ENCODE measurements at regions of chr1 and their contacts with region 1.

Region 1: DNA sequence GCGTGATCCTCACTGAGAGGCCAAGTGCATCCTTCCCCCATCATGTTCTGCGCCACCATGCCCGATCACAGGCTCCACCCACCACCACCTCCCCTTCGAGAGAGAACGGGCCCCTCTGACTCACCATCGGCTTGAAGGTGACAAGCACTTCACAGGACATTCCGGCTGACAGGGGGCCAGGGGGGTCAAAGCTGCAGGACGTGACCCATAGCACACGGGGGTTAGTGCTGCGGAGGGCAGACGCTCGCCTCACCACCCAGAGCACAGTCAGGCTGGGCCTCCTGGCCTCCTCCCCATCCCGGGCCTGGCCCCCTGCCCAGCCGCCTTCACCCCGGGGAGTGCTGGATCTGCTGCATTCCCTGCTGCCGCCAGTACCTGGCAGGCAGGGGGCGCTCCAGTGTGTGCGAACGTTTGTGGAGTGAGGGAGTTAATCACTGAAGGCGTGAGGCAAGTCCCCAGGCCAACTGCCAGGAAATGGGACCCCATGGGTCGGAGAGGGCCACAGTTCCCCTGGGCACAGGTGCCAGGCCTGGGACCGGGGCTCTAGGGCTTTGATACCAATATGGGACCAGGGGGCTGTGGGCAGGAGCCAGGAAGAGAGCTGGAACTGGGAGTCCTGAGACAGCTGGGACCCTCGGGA is 40.9 kb upstream of the TMEM52 start:
- DNase-seq: peak; percentile 81
- H3K4me3 ChIP-seq: no peak overlapping the region
- H3K27ac ChIP-seq: no peak overlapping the region
- H3K4me1 ChIP-seq: peaks cover 0 to 6% (median 5%) of the 10 kb centered on the region in 4 donors
- H3K27me3 ChIP-seq: peaks cover 55% of the 10 kb centered on the region
- CTCF ChIP-seq: peak; percentile 61 to 79 (median 70)
- EP300 ChIP-seq: no peak
- POLR2A ChIP-seq: no peak

Region 2: DNA sequence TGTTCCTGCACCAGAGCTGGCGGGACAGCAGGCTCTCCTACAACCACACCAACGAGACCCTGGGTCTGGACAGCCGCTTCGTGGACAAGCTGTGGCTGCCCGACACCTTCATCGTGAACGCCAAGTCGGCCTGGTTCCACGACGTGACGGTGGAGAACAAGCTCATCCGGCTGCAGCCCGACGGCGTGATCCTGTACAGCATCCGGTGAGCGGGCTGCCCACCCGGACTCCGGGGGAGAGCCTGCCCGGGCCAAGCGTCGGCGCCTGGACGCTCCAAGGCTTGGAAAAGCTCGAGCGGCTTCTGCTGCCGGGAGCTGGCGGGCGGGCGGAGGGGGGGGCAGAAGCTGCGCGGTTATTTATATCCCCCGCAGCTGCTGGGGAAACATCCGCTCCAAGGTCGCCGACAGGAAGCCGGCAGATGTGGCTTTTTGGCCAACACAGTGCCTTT is 65.6 kb after region 1 on chr1:
- in situ Hi-C with region 1: no loop called
- intact Hi-C with region 1: loop called (anchors 10 kb)
- DNase-seq: peak; percentile 27
- H3K4me3 ChIP-seq: peak overlapping the region in 1 of 4 donors; percentile 3
- H3K27ac ChIP-seq: peak overlapping the region in 1 of 4 donors; percentile 12
- H3K4me1 ChIP-seq: no peaks in the 10 kb centered on the region
- H3K27me3 ChIP-seq: peaks cover 44% of the 10 kb centered on the region
- CTCF ChIP-seq: no peak
- EP300 ChIP-seq: no peak
- POLR2A ChIP-seq: no peak

Region 3: DNA sequence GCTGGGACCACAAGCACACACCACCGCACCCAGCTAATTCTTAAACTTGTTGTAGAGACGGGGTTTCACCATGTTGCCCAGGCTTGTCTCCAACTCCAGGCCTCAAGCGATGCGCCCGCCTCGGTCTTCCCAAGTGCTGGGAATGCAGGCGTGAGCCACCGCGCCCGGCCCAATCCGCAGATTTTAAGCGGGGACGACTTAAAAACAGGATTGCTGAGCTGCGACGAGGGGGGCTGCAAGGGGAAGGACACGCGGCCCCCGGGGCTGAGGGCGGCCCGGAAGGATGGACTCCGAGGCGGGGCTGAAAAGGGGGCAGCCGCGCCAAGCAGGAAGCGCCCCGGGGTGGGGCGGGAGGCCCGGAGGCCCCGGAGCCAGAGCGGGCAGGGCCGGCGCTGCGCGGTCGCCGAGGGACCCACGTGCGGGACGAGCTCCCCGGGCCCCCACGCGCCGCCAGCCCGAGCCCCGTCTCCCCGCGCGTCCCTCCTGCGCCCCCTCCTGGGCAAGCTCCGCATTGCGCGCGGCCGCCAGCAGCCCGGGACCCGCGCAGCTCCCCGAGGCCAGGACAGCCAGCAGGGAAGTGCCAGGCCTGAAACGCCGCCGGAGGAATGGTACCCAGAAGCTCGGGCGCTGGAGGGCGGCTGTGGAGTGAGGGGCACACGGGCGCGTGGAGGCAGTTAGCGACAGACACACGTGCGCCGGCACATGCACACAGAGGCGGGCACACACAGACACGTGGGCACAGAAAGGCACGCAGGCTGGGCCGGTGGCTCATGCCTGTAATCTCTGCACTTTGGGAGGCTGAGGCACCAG is 84.8 kb after region 1 on chr1:
- in situ Hi-C with region 1: loop called in 3 of 4 experiments (anchors 10 kb)
- intact Hi-C with region 1: no loop called
- DNase-seq: peak; percentile 79
- H3K4me3 ChIP-seq: peak overlapping the region in 2 of 4 donors; percentile 27 to 28
- H3K27ac ChIP-seq: no peak overlapping the region
- H3K4me1 ChIP-seq: peaks cover 21 to 53% (median 50%) of the 10 kb centered on the region in 4 donors
- H3K27me3 ChIP-seq: peaks cover 28% of the 10 kb centered on the region
- CTCF ChIP-seq: peak; percentile 58 to 89 (median 89)
- EP300 ChIP-seq: no peak
- POLR2A ChIP-seq: no peak